ENCODE measurements at regions of chr9 and their contacts with region 1.

Region 1: DNA sequence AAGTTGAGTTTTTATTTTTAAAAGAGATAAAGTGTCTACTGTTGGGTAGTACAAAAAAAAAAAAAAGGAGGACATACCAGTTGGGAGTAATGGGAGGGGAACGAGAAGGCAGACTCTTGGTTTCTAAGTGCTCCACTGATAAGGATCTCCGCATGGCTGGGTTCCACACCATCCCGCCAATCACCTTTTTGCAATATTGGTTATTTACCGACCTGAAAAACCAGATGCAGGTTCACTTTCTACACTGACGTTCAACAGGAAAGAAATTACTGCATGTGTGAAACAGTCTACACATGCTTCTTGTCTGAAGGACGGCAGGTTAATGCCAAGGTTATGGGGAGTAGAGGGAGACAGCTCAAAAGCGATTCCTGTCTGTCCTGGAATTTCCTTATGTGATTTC is 75.5 kb downstream of the PTPN3 start:
- DNase-seq: no peak
- ATAC-seq: no peak
- H3K4me3 ChIP-seq: no peak overlapping the region
- H3K27ac ChIP-seq: peak overlapping the region in 8 of 10 donors; percentile 21 to 92 (median 58)
- H3K4me1 ChIP-seq: peaks cover 0 to 60% (median 14%) of the 10 kb centered on the region in 9 donors
- H3K27me3 ChIP-seq: no peaks in the 10 kb centered on the region
- CTCF ChIP-seq: no peak

Region 2: DNA sequence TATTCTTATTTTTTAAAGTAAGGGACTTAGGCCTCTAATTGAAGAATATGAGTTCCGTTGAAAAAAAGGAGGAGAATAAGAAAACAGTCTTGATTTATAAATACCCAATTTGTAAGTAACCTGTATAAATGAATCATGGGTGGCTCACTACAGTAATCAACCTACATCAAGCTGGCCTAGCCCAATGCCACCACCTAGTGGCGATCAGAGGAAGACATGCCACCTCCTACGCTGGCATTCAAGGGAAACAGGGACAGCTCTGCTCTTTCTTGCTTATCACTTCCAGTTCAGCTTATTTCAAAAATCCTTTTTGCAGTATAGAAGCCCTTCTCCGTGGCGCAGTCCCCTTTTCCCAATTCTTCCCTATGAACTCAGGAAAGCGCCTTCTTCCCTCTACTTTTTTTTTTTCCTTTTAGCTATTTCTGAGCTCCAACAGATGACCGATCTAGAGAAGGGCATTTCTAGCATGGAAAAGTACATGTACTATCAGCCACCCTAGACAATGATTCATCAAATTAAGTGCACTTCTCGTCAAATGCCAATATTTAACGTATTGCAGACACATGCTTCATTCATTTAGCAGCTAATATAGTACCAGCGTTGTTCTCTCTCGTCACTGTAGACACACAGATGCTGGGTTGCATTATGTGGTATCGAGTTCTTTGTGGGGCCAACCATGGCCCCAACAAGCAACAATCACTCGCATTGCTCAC is 47.2 kb after region 1 on chr9:
- intact Hi-C with region 1: loop called in 2 of 10 experiments (anchors 5 kb)
- DNase-seq: peak; percentile 48 to 66
- ATAC-seq: peak; percentile 74 to 87 (median 84)
- H3K4me3 ChIP-seq: no peak overlapping the region
- H3K27ac ChIP-seq: peak overlapping the region in 3 of 10 donors; percentile 23 to 37 (median 24)
- H3K4me1 ChIP-seq: peaks cover 0 to 43% (median 17%) of the 10 kb centered on the region in 9 donors
- H3K27me3 ChIP-seq: peaks cover 0 to 52% (median 0%) of the 10 kb centered on the region in 7 donors
- CTCF ChIP-seq: peak; percentile 69 to 94 (median 90)

Region 3: GRCh38 chr9:109574068-109574882 is 151.6 kb after region 1 on chr9:
- intact Hi-C with region 1: no loop called
- DNase-seq: peak in 1 of 2 donors; percentile 48
- ATAC-seq: peak; percentile 46 to 81 (median 72)
- H3K4me3 ChIP-seq: no peak overlapping the region
- H3K27ac ChIP-seq: no peak overlapping the region
- H3K4me1 ChIP-seq: peaks cover 0 to 5% (median 0%) of the 10 kb centered on the region in 9 donors
- H3K27me3 ChIP-seq: no peaks in the 10 kb centered on the region
- CTCF ChIP-seq: peak; percentile 39 to 82 (median 73)

Measured in heart right ventricle (tissue), 16 donors.